Dendritic cell treated with granulocyte-macrophage colony-stimulating factor and Interleukin-4, amounts not matched to agents 40 ng/mL and 50 ng/mL, for 4 days (primary cell): ENCODE measurements at regions of chr9 and their contacts with region 1.

Region 1: DNA sequence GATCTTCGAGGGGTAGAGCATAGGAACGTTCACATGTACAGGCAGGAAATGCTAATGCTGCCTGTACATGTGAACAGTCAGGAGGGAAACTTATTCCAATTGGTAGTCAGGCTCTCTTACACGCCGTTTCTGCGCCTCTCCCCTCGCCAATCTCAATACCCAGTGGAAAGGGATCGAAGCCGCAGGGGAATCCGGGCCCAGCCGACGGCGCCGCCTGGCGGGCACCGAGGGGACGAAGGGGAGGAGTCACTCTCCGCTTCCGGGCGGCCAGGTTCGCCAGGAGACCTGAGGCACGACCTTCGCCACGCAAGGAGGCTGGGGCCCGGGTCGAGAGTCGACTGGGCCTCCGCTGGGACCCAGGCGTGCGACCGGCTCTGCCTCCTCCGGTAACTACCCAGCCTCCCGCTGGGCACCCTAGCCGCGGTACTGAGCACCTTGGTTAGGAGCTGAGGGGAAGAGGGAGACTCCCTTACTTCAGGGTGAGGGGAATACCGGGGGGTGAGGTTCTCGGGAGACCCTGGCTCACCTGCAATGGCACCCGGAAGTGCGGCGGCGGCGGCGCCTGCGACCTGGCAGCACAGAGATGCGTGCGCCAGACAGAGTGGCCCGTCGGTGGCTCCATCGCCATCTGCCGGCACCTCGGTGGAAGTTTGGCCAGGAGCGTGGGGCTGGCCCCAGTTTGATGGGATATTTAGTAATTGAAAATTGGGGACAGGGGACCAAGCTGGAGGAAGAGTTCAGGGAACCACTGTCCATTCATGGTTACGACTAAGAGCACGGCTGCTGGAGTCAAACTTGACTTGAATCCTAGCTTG is at the start of gene PIGO:
- H3K4me3 Mint-ChIP-seq: peak within 1 kb of the TSS; percentile 78
- H3K27ac Mint-ChIP-seq: peak within 1 kb of the TSS; percentile 92
- H3K4me1 Mint-ChIP-seq: peaks cover 33% of the 10 kb centered on the region
- H3K27me3 Mint-ChIP-seq: no peaks in the 10 kb centered on the region

Region 2: GRCh38 chr9:35079426-35080341 is 16.6 kb before region 1 on chr9 and contains the start of gene FANCG:
- intact Hi-C with region 1: loop called (anchors 2 kb)
- H3K4me3 Mint-ChIP-seq: peak within 1 kb of the TSS; percentile 92
- H3K27ac Mint-ChIP-seq: peak within 1 kb of the TSS; percentile 89
- H3K4me1 Mint-ChIP-seq: peaks cover 26% of the 10 kb centered on the region
- H3K27me3 Mint-ChIP-seq: no peaks in the 10 kb centered on the region

Region 3: DNA sequence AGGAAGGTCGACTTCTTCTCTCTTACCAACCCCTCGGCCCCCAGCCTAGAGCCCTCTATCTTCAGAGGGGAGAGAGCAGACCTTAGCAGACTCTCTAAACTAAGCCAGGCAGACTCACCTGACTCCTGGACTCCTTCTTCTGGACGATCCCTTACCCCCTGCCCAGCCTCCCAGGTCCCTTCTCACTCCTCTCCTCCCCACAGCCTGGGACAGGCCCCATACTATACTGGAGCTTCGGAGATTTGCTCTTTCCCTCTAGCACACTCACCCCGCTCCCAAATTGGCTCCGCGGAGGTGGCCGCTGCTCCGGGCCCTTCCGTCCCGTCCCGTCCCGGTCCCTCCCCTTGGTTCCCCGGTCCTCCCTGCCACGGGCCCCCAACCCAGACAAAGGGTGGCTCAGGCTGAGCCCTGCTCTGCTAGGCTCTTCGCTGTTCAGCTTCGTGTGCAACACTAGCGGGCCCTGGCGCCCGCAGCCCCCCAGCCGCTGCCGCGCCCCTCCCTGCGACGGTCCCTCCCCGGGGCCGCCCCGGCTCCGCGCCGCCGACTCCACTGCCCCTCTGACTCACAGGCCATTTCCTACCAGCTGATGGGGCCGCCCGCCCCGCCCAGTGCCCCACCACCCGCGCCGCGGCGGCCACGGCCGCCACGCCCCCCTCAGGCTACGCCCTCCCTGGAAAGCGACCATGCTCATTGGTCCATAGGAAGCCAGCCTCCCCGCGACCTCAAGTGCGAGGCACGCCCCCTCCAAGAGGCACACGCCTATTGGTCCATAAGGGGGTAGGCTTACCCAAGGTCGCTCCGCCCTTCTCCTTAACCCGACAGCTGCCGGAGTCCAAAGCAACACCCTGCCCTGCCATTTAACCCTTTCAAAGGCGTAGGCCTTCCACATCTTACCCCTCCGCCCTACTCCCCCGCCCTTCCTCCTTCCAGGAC is 15.0 kb after region 1 on chr9:
- intact Hi-C with region 1: loop called (anchors 1 kb)
- H3K4me3 Mint-ChIP-seq: peak overlapping the region; percentile 82
- H3K27ac Mint-ChIP-seq: peak overlapping the region; percentile 88
- H3K4me1 Mint-ChIP-seq: peaks cover 68% of the 10 kb centered on the region
- H3K27me3 Mint-ChIP-seq: no peaks in the 10 kb centered on the region